CD8-positive, alpha-beta memory T cell (primary cell): ENCODE measurements at regions of chr10 and their contacts with region 1.

Region 1: GRCh38 chr10:101782811-101783735 is at the start of gene NPM3:
- DNase-seq: peak; percentile 66 to 85 (median 74)
- H3K4me3 ChIP-seq: peak within 1 kb of the TSS; percentile 67
- H3K4me3 Mint-ChIP-seq: peak within 1 kb of the TSS; percentile 91 to 100 (median 99)
- H3K27ac ChIP-seq: peak within 1 kb of the TSS; percentile 52
- H3K27ac Mint-ChIP-seq: peak within 1 kb of the TSS; percentile 77 to 98 (median 96)
- H3K4me1 ChIP-seq: peaks cover 54% of the 10 kb centered on the region
- H3K4me1 Mint-ChIP-seq: peaks cover 53 to 82% (median 69%) of the 10 kb centered on the region in 3 donors
- H3K27me3 ChIP-seq: peaks cover 5% of the 10 kb centered on the region
- H3K27me3 Mint-ChIP-seq: peaks cover 6 to 11% of the 10 kb centered on the region in 2 donors
- total RNA-seq, gene NPM3: 209 to 217 TPM

Region 2: GRCh38 chr10:101602761-101603398 is 180.2 kb before region 1 on chr10:
- CTCF ChIA-PET with region 1: interaction called, 14 read pairs
- POLR2A ChIA-PET with region 1: no interaction called
- DNase-seq: peak; percentile 14 to 60 (median 29)
- H3K4me3 ChIP-seq: no peak overlapping the region
- H3K4me3 Mint-ChIP-seq: no peak overlapping the region
- H3K27ac ChIP-seq: no peak overlapping the region
- H3K27ac Mint-ChIP-seq: peak overlapping the region in 3 of 8 donors; percentile 21 to 42 (median 22)
- H3K4me1 ChIP-seq: no peaks in the 10 kb centered on the region
- H3K4me1 Mint-ChIP-seq: no peaks in the 10 kb centered on the region
- H3K27me3 ChIP-seq: no peaks in the 10 kb centered on the region
- H3K27me3 Mint-ChIP-seq: peaks cover 0 to 3% of the 10 kb centered on the region in 2 donors

Region 3: GRCh38 chr10:101797403-101798059 is 14.5 kb after region 1 on chr10:
- CTCF ChIA-PET with region 1: interaction called, 16 read pairs
- POLR2A ChIA-PET with region 1: interaction called, 3 read pairs
- DNase-seq: no peak
- H3K4me3 ChIP-seq: no peak overlapping the region
- H3K4me3 Mint-ChIP-seq: no peak overlapping the region
- H3K27ac ChIP-seq: no peak overlapping the region
- H3K27ac Mint-ChIP-seq: peak overlapping the region in 1 of 8 donors; percentile 10
- H3K4me1 ChIP-seq: no peaks in the 10 kb centered on the region
- H3K4me1 Mint-ChIP-seq: peaks cover 34 to 60% (median 57%) of the 10 kb centered on the region in 3 donors
- H3K27me3 ChIP-seq: no peaks in the 10 kb centered on the region
- H3K27me3 Mint-ChIP-seq: no peaks in the 10 kb centered on the region

Region 4: GRCh38 chr10:101812606-101813005 is 29.5 kb after region 1 on chr10:
- CTCF ChIA-PET with region 1: interaction called, 18 read pairs
- POLR2A ChIA-PET with region 1: interaction called, 24 read pairs
- DNase-seq: no peak
- H3K4me3 ChIP-seq: no peak overlapping the region
- H3K4me3 Mint-ChIP-seq: peak overlapping the region in 4 of 7 donors; percentile 11 to 100 (median 48)
- H3K27ac ChIP-seq: no peak overlapping the region
- H3K27ac Mint-ChIP-seq: peak overlapping the region in 5 of 8 donors; percentile 57 to 89 (median 82)
- H3K4me1 ChIP-seq: peaks cover 38% of the 10 kb centered on the region
- H3K4me1 Mint-ChIP-seq: peaks cover 51 to 65% (median 58%) of the 10 kb centered on the region in 3 donors
- H3K27me3 ChIP-seq: no peaks in the 10 kb centered on the region
- H3K27me3 Mint-ChIP-seq: peaks cover 0 to 1% of the 10 kb centered on the region in 2 donors

Region 5: DNA sequence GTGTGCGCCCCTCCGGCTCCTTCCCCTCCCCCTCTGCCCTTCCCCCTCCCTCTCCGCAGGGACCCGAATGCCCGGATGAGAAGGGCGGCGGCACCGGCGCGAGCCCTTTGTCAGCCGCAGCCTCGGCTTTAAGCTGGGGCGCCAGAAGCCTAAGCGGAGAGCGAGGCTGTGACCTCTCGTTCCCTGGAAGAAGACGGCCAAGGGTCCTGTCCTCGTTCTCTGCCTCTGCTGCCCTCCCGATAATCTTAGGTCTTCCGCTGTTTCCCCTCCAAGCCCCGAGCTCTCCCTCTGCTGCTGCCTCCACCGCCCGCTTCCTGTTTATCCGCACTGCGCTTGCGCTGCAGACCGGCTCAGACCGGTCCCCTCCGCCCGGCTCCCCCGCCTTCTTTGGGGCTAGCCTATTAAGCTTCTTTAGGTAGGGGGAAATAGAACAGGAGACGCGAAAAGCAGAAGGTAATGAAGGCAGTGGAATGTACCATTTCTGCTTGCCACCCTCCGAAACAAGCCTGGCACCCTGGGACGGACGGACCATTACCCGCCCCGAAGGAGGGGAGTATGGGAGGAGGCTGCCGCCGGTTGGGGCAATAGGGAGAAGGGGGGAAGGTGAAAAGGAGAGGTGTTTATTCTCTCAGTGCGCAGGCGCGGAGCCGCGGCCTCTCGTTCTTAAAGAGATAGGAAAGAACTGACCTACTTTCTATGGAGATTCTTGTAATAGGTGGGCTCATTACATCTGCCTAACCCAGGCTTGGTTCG is 35.2 kb after region 1 on chr10 and contains the start of gene OGA:
- CTCF ChIA-PET with region 1: interaction called, 18 read pairs
- POLR2A ChIA-PET with region 1: interaction called, 24 read pairs
- DNase-seq: peak; percentile 96 to 100 (median 99)
- H3K4me3 ChIP-seq: peak within 1 kb of the TSS; percentile 79
- H3K4me3 Mint-ChIP-seq: peak within 1 kb of the TSS; percentile 92 to 100 (median 97)
- H3K27ac ChIP-seq: peak within 1 kb of the TSS; percentile 79
- H3K27ac Mint-ChIP-seq: peak within 1 kb of the TSS; percentile 90 to 99 (median 97)
- H3K4me1 ChIP-seq: peaks cover 30% of the 10 kb centered on the region
- H3K4me1 Mint-ChIP-seq: peaks cover 42 to 49% (median 45%) of the 10 kb centered on the region in 3 donors
- H3K27me3 ChIP-seq: no peaks in the 10 kb centered on the region
- H3K27me3 Mint-ChIP-seq: peaks cover 0 to 4% of the 10 kb centered on the region in 2 donors
- total RNA-seq, gene OGA: 95.8 to 109 TPM